ENCODE measurements at regions of chr4 and their contacts with region 1.

Region 1: DNA sequence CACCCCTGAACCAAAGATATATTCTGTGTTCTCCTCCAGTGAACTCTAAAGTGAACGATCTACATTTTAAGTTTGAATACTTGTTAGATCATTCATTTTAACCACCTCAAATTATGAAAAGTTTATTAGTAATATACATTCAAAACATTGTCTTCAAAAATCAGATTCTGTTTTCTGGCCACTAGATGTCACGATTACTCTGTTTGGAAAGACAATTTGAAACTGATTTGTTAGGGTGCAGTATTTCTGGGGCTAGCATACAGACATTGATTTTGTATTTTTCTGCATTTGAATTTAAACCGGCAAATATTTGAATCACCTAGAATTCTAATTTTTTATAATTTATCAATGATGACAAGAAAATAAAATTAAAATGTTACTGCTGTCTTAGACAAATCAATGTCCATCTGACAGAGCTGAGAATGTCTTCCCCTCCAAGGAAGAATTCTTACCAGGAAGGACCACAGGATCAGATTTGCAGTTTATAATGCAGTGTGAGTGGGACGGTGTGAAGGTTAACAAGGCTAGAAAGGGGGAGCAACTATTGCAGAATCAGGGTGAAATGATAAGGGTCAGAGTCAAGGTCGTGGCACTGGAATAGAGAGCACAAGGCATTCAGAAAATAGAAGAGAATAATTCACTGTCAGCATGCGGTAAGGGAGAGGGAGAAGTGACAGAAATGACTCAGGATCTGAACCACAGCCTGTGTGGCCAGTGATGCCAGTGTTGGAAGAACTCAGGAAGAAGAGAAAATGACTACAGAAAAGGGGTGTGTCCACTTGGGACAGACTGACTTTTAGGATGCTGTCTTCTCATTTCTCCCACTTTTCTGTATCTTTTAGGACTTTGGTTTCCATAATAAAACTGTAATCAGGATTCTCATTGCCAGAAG is 91.6 kb downstream of the ANXA10 start:
- DNase-seq: peak; percentile 23
- H3K4me3 ChIP-seq: no peak overlapping the region
- H3K27ac ChIP-seq: no peak overlapping the region
- H3K4me1 ChIP-seq: no peaks in the 10 kb centered on the region
- H3K27me3 ChIP-seq: no peaks in the 10 kb centered on the region
- CTCF ChIP-seq: peak; percentile 47 to 64

Region 2: GRCh38 chr4:168293386-168293975 is 109.5 kb after region 1 on chr4:
- CTCF ChIA-PET with region 1: no interaction called
- dilution Hi-C with region 1: no loop called
- in situ Hi-C with region 1: no loop called
- intact Hi-C with region 1: no loop called
- DNase-seq: no peak
- H3K4me3 ChIP-seq: no peak overlapping the region
- H3K27ac ChIP-seq: no peak overlapping the region
- H3K4me1 ChIP-seq: no peaks in the 10 kb centered on the region
- H3K27me3 ChIP-seq: no peaks in the 10 kb centered on the region
- CTCF ChIP-seq: no peak

Region 3: DNA sequence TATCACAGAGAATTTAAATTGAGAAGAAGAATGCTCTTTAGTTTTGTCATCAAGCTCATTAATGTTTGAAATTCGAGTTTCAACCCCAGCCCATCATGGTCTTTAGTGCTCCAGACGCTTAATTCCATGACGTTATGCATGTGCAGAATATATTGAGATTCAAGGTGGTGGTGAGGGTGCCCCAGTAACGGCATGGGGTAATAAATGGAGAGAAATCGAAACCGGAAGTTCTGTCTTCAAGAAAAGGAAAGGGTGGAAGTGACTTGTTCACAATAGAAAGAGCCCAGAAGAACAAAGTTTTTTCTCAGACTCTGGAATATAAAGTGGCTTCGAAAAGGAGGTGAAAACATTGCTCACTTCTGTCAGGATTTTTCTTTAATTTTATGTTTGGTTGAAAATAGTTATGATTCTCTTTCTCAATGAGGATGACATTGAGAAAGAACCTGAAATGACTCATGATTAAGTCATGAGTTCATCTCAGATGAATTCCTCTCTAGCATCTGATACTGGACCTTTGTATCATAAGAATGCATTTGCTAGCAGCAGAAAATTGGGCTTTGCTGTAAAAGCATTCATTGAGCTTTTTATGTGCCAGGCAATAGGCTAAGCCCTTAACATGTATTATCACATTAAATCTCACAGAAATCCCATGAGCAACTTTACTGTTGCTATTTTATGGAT is 297.1 kb after region 1 on chr4:
- CTCF ChIA-PET with region 1: no interaction called
- dilution Hi-C with region 1: no loop called
- in situ Hi-C with region 1: no loop called
- intact Hi-C with region 1: loop called (anchors 10 kb)
- DNase-seq: peak; percentile 81
- H3K4me3 ChIP-seq: peak overlapping the region; percentile 75 to 83 (median 83)
- H3K27ac ChIP-seq: peak overlapping the region; percentile 98
- H3K4me1 ChIP-seq: peaks cover 26% of the 10 kb centered on the region
- H3K27me3 ChIP-seq: no peaks in the 10 kb centered on the region
- CTCF ChIP-seq: no peak

Region 4: GRCh38 chr4:168685136-168685809 is 501.3 kb after region 1 on chr4:
- CTCF ChIA-PET with region 1: no interaction called
- dilution Hi-C with region 1: no loop called
- in situ Hi-C with region 1: loop called in 1 of 2 experiments (anchors 25 kb)
- intact Hi-C with region 1: no loop called
- DNase-seq: no peak
- H3K4me3 ChIP-seq: no peak overlapping the region
- H3K27ac ChIP-seq: no peak overlapping the region
- H3K4me1 ChIP-seq: peaks cover 4% of the 10 kb centered on the region
- H3K27me3 ChIP-seq: no peaks in the 10 kb centered on the region
- CTCF ChIP-seq: no peak

Region 5: DNA sequence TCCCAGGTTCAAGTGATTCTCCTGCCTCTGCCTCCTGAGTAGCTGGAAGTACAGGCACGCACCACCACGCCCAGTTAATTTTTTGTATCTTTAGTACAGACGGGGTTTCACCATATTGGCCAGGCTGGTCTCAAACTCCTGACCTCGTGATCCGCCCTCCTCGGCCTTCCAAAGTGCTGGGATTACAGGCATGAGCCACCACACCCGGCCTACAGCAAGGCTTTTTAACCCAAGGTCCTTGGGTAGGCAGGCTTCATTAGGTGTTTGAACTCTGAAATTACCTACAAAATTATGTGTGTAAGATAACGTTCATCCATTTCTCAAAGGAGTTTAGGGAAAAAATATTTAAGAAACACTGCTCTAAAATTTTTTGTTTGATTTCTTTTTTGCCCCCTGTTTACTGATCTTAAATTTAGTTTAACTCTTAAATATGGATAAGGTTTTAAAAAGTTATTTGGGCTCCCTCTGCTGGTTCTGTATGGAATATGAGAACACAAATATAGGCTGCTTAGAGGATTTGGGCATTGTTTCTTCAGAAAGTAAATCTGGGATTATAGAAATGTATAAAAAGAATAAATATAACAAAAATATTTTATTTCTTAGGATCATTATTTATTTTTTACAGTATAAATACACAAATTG is 733.3 kb after region 1 on chr4:
- CTCF ChIA-PET with region 1: no interaction called
- dilution Hi-C with region 1: no loop called
- in situ Hi-C with region 1: loop called (anchors 25 kb)
- intact Hi-C with region 1: loop called (anchors 5 kb)
- DNase-seq: no peak
- H3K4me3 ChIP-seq: no peak overlapping the region
- H3K27ac ChIP-seq: no peak overlapping the region
- H3K4me1 ChIP-seq: no peaks in the 10 kb centered on the region
- H3K27me3 ChIP-seq: no peaks in the 10 kb centered on the region
- CTCF ChIP-seq: peak; percentile 41 to 44

Region 6: DNA sequence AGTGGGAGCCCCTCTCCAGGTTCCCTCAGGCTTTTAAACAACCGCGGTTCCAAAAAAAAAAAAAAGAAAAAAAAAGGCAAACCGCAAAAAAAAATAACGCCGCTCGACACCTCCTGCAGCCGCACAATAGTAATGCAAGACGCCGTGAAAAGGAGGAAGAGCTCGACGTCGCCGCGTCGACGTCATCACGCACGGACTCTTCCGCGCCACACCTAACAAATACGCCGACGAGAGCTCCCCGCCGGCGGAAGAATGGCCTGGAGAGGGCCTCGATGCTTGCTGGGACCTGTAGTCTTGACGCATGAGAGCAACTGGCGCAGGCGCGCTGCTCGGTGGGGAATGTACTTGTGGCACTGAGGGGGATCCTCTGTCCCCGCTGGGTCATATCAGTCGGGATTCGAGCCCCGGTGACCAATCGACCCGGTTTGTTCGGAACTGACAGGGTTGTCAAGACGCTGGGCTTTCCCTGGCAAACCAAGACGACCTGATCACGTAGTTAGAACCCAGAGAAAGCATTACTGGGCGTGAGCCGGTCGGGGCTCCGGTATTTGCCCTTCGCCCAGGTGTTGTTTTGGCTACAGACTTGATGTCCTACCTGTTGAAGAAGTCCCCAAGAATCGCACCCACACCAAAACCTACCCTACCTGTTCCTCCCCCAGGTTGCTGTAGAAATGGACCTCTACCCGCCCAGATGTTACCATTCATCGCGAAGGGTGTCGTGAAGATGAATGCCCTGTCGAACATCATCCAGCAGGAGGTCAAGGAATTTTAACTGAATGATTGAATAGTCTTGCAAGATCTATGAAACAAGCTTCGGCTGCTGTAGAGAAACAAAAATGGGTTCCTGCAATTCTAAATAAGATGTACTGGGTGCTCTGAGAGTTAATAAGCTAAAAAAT is 826.4 kb after region 1 on chr4 and contains the start of gene CBR4:
- CTCF ChIA-PET with region 1: interaction called, 4 read pairs
- dilution Hi-C with region 1: no loop called
- in situ Hi-C with region 1: no loop called
- intact Hi-C with region 1: loop called (anchors 5 kb)
- DNase-seq: peak; percentile 98
- H3K4me3 ChIP-seq: peak within 1 kb of the TSS; percentile 67 to 79 (median 78)
- H3K27ac ChIP-seq: peak within 1 kb of the TSS; percentile 93
- H3K4me1 ChIP-seq: peaks cover 28% of the 10 kb centered on the region
- H3K27me3 ChIP-seq: no peaks in the 10 kb centered on the region
- CTCF ChIP-seq: peak; percentile 15 to 43
- total RNA-seq, gene CBR4: 19.0 to 24.4 TPM